AG04449 (cell line): ENCODE measurements at regions of chr18 and their contacts with region 1.

Region 1: GRCh38 chr18:43571078-43571689 is 293.9 kb upstream of the SYT4 start:
- DNase-seq: no peak
- H3K4me3 ChIP-seq: no peak overlapping the region
- CTCF ChIP-seq: peak; percentile 58

Region 2: DNA sequence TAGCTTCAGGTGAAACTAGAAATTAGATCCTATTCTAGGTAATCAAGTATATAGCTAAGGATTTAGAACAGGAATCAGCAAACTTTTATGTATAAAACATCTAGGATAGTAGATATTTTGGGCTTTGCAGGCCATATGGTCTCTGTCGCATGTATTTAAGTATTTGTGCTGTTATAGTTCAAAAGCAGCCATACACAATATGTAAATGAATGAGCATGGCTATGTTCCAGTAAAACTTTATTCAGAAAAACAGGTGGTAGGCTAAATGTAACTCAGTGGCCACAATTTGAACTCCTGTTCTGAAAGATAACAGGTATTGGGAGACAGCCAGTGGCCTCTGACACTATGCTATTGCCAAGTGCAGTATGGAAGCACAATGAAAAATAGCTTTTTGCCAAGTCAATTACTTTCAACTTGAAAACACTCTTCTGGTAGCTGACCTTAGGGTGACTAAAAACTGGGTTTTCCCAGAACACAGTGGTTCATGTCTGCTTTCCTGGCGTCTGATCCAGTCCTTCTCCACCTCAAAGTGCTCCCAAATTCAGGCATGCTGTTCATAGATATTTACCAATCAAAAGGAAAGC is 10.8 kb after region 1 on chr18:
- CTCF ChIA-PET with region 1: interaction called, 251 read pairs
- POLR2A ChIA-PET with region 1: no interaction called
- DNase-seq: no peak
- H3K4me3 ChIP-seq: no peak overlapping the region
- CTCF ChIP-seq: no peak

Region 3: DNA sequence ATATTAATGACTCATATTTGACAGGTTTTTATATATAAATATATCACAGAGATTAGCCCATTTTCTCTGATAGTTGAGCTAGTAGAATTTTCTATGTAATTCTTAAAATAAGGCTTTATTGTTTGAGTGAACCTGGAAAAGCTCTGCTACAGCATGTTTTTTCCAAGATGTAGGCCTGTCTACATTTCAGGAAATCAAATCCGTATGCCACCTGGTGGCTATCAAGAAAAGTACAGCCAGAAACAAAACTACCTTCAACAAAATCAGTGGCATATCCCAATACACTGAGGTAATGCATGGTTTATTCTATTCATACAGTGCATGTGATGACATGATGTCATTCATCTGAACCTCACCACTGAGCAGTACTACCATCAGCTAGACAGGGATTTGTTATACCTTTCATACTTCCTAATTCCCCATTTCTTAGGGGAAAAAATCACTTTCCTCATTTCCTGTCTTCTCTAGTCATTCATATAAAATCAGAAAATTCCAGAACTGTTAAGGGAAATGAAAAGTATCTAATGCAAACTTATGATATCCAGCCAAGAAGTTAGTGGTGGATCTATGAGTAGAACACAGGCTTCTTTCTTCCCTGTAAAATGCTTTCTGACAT is 16.5 kb after region 1 on chr18:
- CTCF ChIA-PET with region 1: interaction called, 251 read pairs
- POLR2A ChIA-PET with region 1: no interaction called
- DNase-seq: no peak
- H3K4me3 ChIP-seq: no peak overlapping the region
- CTCF ChIP-seq: peak; percentile 61

Region 4: DNA sequence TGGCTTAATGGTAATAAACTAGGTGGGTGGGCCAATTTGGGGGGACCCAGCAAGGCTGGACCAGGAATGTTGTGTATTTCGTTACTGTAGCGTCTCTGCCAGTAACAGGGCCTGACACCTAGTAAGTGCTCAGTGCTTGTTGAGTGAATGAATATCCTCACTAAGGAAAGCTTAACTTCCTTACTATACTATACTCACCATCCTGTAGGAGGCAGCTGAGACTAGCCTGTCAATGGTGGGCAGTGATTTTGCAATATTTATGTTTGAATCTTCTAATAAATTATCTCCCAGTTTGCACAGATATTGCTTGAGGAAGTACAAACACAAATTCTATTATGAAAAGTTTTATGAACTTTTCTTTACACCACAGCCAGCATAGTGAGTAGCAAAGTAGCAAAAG is 76.8 kb after region 1 on chr18:
- CTCF ChIA-PET with region 1: no interaction called
- POLR2A ChIA-PET with region 1: no interaction called
- DNase-seq: no peak
- H3K4me3 ChIP-seq: no peak overlapping the region
- CTCF ChIP-seq: no peak

Region 5: DNA sequence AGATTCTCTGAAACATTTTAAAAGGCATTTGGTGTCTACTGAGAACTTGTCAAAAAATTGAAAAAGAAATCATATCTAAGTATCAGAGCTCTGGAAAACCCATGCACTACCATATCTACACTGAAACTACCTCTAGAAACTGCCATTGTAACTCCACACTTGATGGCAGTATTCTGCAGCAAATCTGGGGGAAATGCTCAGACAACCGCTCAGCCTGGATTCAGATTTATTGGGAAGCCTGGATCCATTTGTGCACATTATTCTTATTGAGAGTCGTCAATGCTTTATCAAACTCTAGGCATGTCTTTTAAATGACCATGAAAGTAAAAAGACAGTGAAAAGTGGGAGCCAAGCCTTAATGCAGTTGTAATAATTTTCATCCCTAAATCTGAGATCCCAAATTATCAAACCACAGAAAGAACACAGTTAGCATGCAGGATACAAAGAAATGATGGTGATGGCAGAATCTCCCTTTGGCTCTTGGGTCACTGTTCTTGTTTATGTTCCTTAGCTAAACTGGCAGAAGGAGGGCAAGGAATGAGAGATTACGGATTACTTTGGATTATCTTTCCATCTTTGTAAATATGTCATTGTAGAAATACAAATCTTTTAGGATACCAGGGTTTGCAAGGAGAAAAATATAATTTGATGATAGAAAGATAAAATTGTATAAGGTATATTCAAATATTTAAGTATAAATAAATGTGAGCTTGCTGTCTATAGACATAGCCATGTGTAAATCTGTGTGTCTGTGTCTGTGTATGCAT is 218.2 kb after region 1 on chr18:
- CTCF ChIA-PET with region 1: no interaction called
- POLR2A ChIA-PET with region 1: no interaction called
- DNase-seq: no peak
- H3K4me3 ChIP-seq: no peak overlapping the region
- CTCF ChIP-seq: peak; percentile 17